ENCODE measurements at regions of chr3 and their contacts with region 1.

Region 1: GRCh38 chr3:51953445-51953844 is 1.7 kb upstream of the GPR62 start:
- DNase-seq: peak; percentile 91
- ATAC-seq: peak; percentile 77
- H3K4me3 ChIP-seq: no peak overlapping the region
- H3K27ac ChIP-seq: peak overlapping the region; percentile 41; the same call in 1 of the 2 replicates
- H3K4me1 ChIP-seq: peaks cover 9% of the 10 kb centered on the region
- H3K27me3 ChIP-seq: no peaks in the 10 kb centered on the region
- CTCF ChIP-seq: no peak
- POLR2A ChIP-seq: no peak
- RAD21 ChIP-seq: no peak

Region 2: DNA sequence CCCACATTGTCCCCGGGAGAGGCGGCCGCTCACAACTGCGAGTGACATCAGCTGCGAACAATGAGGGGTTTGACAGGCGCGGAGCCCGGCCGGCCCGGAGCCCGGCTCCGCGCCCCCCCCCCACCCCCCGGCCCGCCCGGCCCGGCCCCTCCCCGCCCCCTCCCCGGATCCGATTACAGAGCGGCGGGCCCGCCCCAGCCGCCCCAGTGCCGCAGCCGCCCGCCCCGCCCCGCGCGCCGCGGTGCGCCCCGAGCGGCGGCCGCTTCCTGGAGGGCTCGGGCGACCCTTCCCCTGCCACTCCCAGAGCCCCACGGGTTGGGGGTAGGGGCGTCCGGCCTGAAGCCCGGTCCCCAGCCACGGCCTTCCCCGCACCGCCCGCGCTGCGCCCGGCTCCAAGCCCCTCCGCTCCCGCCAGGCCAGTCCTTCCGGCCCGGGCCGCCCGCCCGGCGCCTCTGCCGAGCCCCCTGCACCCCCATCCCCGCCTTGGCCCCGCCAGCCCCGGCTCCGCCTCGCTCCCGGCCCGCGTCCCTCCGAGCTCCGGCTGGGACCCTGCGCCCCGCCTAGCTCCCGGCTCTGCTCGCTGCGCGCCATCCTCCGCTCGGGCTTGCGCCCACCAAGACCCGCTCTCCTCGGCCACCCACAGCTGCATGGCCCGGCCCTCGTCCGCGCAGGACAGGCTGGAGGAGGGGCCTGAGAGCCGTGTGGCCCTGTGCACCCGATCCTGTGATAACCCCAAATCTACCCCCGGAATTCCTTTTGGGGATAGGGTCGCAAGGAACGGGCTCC is 14.1 kb after region 1 on chr3 and contains the start of gene PCBP4:
- CTCF ChIA-PET with region 1: no interaction called
- POLR2A ChIA-PET with region 1: interaction called, 10 read pairs
- dilution Hi-C with region 1: no loop called
- in situ Hi-C with region 1: no loop called
- intact Hi-C with region 1: no loop called
- DNase-seq: peak; percentile 34
- ATAC-seq: peak; percentile 80
- H3K4me3 ChIP-seq: peak within 1 kb of the TSS; percentile 70
- H3K27ac ChIP-seq: peak within 1 kb of the TSS; percentile 88
- H3K4me1 ChIP-seq: peaks cover 28% of the 10 kb centered on the region
- H3K27me3 ChIP-seq: no peaks in the 10 kb centered on the region
- CTCF ChIP-seq: no peak
- POLR2A ChIP-seq: no peak
- RAD21 ChIP-seq: no peak
- total RNA-seq, gene PCBP4: 70.8 and 71.1 TPM in 2 replicates